ENCODE measurements at regions of chr3 and their contacts with region 1.

Region 1: DNA sequence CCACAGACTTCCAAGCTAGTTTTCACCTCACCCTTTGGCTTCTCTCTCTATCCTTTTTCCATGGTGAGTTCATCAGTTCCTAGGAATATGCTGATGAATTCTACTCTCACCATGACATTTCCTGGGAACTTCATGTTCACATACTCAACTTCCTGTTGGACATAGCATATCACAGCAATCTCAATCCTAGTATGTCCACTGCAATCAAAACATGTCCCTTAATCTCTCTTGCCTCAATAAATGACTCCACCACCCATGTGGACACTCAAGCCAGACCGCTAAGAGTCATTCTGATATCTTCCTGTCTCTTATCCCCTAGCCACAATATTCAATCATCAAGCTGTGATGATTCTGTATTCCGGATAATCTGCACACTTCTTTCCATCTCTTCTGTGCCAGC is 66.7 kb upstream of the MME start:
- DNase-seq: no peak
- H3K4me3 ChIP-seq: no peak overlapping the region
- H3K27ac ChIP-seq: no peak overlapping the region
- H3K4me1 ChIP-seq: no peaks in the 10 kb centered on the region
- H3K27me3 ChIP-seq: no peaks in the 10 kb centered on the region
- CTCF ChIP-seq: no peak

Region 2: DNA sequence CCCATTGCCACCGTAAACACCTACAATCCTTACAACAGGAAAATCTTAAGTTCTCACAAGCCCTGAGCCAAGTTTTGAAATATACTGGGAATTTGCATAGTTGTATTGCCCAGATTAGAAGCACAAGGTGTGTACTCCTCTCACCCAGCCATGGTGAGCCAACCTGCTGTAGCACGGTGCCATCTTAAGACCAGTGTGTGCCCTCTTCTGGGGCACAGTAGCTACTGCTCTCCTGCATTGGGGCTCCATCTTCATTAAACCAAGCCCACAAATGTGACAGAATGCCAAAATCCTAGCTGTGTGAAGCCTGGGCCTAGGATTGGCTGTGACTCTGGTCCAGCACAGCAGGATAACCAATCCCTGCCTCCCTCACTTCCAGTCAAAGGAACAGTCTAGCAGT is 74.1 kb before region 1 on chr3:
- CTCF ChIA-PET with region 1: no interaction called
- dilution Hi-C with region 1: no loop called
- in situ Hi-C with region 1: no loop called
- intact Hi-C with region 1: no loop called
- DNase-seq: no peak
- H3K4me3 ChIP-seq: no peak overlapping the region
- H3K27ac ChIP-seq: no peak overlapping the region
- H3K4me1 ChIP-seq: no peaks in the 10 kb centered on the region
- H3K27me3 ChIP-seq: no peaks in the 10 kb centered on the region
- CTCF ChIP-seq: peak in 1 of 2 donors; percentile 21

Region 3: GRCh38 chr3:154981664-154982063 is 31.8 kb before region 1 on chr3:
- CTCF ChIA-PET with region 1: interaction called, 11 read pairs
- dilution Hi-C with region 1: no loop called
- in situ Hi-C with region 1: no loop called
- intact Hi-C with region 1: no loop called
- DNase-seq: no peak
- H3K4me3 ChIP-seq: no peak overlapping the region
- H3K27ac ChIP-seq: no peak overlapping the region
- H3K4me1 ChIP-seq: no peaks in the 10 kb centered on the region
- H3K27me3 ChIP-seq: no peaks in the 10 kb centered on the region
- CTCF ChIP-seq: no peak

Region 4: GRCh38 chr3:155047672-155048071 is 34.2 kb after region 1 on chr3:
- CTCF ChIA-PET with region 1: no interaction called
- dilution Hi-C with region 1: no loop called
- in situ Hi-C with region 1: no loop called
- intact Hi-C with region 1: no loop called
- DNase-seq: no peak
- H3K4me3 ChIP-seq: no peak overlapping the region
- H3K27ac ChIP-seq: no peak overlapping the region
- H3K4me1 ChIP-seq: no peaks in the 10 kb centered on the region
- H3K27me3 ChIP-seq: no peaks in the 10 kb centered on the region
- CTCF ChIP-seq: no peak

Measured in mammary epithelial cell (primary cell).